ENCODE measurements at regions of chr20 and their contacts with region 1.

Region 1: GRCh38 chr20:460707-461106 is 1.6 kb downstream of the TBC1D20 start:
- H3K4me3 ChIP-seq: no peak overlapping the region
- H3K27ac ChIP-seq: no peak overlapping the region
- H3K4me1 ChIP-seq: peaks cover 15% of the 10 kb centered on the region
- CTCF ChIP-seq: no peak

Region 2: DNA sequence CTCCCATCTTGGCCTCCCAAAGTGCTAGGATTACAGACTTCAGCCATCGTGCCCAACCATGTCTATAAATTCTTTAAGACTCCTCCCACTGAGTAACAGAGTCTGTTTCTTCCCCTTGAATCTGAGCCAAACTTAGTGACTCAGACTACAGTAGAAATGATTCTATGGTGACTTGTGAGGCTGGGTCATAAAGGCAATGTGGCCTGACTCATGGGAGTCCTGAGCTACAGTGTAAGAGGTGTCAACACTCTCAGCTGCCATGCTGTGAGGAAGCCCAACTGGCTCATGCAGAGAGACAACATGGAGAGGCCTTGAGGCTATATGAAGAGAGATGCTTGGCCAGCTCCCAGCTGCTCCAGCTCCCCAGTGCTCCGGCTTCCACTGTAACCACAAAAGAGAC is 119.0 kb before region 1 on chr20:
- CTCF ChIA-PET with region 1: interaction called, 11 read pairs
- POLR2A ChIA-PET with region 1: interaction called, 4 read pairs
- H3K4me3 ChIP-seq: no peak overlapping the region
- H3K27ac ChIP-seq: no peak overlapping the region
- H3K4me1 ChIP-seq: peaks cover 4% of the 10 kb centered on the region
- CTCF ChIP-seq: no peak

Region 3: GRCh38 chr20:400454-401275 is 60.0 kb before region 1 on chr20:
- CTCF ChIA-PET with region 1: no interaction called
- POLR2A ChIA-PET with region 1: interaction called, 12 read pairs
- H3K4me3 ChIP-seq: no peak overlapping the region
- H3K27ac ChIP-seq: no peak overlapping the region
- H3K4me1 ChIP-seq: no peaks in the 10 kb centered on the region
- CTCF ChIP-seq: no peak

Region 4: GRCh38 chr20:496126-496696 is 35.5 kb after region 1 on chr20:
- CTCF ChIA-PET with region 1: no interaction called
- POLR2A ChIA-PET with region 1: no interaction called
- H3K4me3 ChIP-seq: no peak overlapping the region
- H3K27ac ChIP-seq: no peak overlapping the region
- H3K4me1 ChIP-seq: no peaks in the 10 kb centered on the region
- CTCF ChIP-seq: no peak

Region 5: DNA sequence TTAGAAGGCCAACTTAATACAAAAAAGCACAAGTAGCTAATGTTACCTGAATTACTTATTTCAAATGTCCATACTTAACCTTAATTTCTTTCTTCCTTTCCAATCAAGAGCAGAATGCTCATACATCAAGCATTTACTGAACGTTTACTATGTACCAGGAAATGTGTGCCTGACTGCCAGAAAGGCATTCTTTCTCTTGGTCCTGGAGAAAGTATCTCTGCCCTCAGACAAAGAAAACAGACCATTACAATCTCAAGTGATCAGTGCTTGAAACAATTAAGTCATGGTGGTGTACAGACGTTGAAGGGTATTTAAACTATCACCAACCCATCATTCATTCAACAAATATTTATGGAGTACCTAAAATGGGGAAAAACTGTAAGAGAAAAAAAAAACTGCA is 56.5 kb after region 1 on chr20:
- CTCF ChIA-PET with region 1: no interaction called
- POLR2A ChIA-PET with region 1: no interaction called
- H3K4me3 ChIP-seq: no peak overlapping the region
- H3K27ac ChIP-seq: no peak overlapping the region
- H3K4me1 ChIP-seq: 0 out of 2 replicates have a peak, but pooled peaks cover 7% of the 10 kb centered on the region
- CTCF ChIP-seq: no peak